ENCODE measurements at regions of chr11 and their contacts with region 1.

Region 1: DNA sequence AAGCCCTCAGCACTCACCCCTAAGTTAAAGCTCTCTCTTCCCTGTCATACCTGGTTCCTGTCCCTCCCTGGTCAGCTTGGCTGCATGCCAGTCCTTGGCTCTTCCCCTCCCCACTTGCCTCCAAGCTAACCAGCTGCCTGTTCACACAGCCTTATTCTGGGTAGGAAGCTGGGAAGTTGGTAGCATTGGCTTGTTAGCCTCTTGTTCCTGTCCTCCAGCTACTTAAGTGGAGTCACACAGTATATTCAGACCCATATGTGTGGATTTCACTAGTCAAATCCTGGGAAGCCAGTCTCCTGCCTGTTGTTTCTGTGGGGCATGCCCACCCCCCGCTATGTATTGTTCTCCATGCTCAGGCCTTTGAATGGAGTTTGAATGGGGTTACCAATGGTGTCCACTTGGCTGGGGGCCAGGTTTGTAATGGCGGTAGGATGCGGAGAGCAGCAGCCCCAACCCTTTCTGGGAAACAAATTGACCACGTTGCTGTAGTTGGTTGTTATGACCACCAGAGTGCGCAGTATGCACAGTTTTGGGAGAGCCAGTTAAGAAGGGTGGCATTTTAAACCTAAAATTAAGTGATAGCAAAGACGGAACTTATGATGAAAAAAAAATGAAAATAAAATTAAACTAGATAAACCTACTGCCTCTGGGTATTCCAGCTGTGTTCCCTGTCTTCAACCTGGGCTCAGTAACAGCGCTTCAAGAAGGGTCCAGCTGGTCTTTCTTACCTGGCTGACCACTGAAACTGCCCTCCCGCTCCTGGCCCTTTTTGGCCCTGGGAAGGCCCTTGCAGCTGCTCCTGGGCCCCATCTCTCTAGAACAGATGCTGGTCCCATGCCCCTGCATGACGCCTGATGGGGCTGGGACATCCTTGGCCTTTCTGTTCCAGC is 10.7 kb upstream of the RPS3 start:
- DNase-seq: peak; percentile 50 to 88 (median 58)
- ATAC-seq: peak; percentile 90
- H3K4me3 ChIP-seq: no peak overlapping the region
- H3K4me3 Mint-ChIP-seq: no peak overlapping the region
- H3K27ac ChIP-seq: no peak overlapping the region
- H3K27ac Mint-ChIP-seq: no peak overlapping the region
- H3K4me1 ChIP-seq: peaks cover 19% of the 10 kb centered on the region
- H3K4me1 Mint-ChIP-seq: peaks cover 12% of the 10 kb centered on the region
- H3K27me3 ChIP-seq: no peaks in the 10 kb centered on the region
- H3K27me3 Mint-ChIP-seq: no peaks in the 10 kb centered on the region
- CTCF ChIP-seq: peak; percentile 90

Region 2: DNA sequence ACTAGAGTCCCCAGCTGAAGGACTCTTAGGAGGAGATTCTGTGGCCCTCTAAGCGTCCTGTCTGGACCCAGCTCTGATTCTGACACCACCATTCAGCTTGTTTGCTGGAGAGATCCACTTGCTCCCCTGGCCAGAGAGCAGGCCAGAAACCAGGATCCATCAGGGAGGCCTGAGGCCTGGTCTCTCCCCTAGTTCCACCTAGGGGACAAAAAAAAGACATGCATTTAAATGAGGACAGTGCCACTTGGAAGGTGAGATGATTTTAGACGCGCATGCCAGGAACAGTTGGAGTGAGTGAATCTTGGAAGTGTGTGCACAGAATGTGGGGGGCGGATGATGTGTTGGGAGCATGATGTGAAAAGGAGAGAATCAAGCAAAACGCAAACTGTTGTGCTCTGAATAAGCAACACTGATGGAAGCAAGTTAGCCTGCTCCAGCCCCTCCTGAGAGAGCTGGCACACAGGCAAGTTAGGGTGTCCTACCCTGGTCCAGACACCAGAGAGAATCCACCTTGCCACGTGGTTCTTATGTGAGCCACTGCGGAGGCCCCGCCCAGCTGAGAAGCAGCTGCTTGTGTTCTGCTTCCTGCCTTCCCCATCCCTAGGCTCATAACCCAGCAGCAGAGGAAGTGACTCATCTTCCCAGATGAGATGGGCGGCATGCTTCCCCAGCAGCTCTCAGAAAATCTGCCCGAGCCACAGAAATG is 245.8 kb before region 1 on chr11:
- CTCF ChIA-PET with region 1: interaction called, 3 read pairs
- POLR2A ChIA-PET with region 1: no interaction called
- intact Hi-C with region 1: loop called (anchors 5 kb)
- DNase-seq: peak; percentile 20 to 88 (median 70)
- ATAC-seq: peak; percentile 94
- H3K4me3 ChIP-seq: no peak overlapping the region
- H3K4me3 Mint-ChIP-seq: no peak overlapping the region
- H3K27ac ChIP-seq: peak overlapping the region; percentile 37 to 55
- H3K27ac Mint-ChIP-seq: peak overlapping the region; percentile 18
- H3K4me1 ChIP-seq: peaks cover 34% of the 10 kb centered on the region
- H3K4me1 Mint-ChIP-seq: peaks cover 43% of the 10 kb centered on the region
- H3K27me3 ChIP-seq: no peaks in the 10 kb centered on the region
- H3K27me3 Mint-ChIP-seq: no peaks in the 10 kb centered on the region
- CTCF ChIP-seq: no peak

Region 3: GRCh38 chr11:75328426-75329277 is 60.0 kb before region 1 on chr11:
- CTCF ChIA-PET with region 1: interaction called, 8 read pairs
- POLR2A ChIA-PET with region 1: interaction called, 6 read pairs
- intact Hi-C with region 1: loop called (anchors 1 kb)
- DNase-seq: peak; percentile 20 to 80 (median 58)
- ATAC-seq: peak; percentile 96
- H3K4me3 ChIP-seq: no peak overlapping the region
- H3K4me3 Mint-ChIP-seq: peak overlapping the region; percentile 80
- H3K27ac ChIP-seq: peak overlapping the region; percentile 44 to 64
- H3K27ac Mint-ChIP-seq: peak overlapping the region; percentile 96
- H3K4me1 ChIP-seq: peaks cover 62% of the 10 kb centered on the region
- H3K4me1 Mint-ChIP-seq: peaks cover 80% of the 10 kb centered on the region
- H3K27me3 ChIP-seq: no peaks in the 10 kb centered on the region
- H3K27me3 Mint-ChIP-seq: no peaks in the 10 kb centered on the region
- CTCF ChIP-seq: peak; percentile 57

Region 4: DNA sequence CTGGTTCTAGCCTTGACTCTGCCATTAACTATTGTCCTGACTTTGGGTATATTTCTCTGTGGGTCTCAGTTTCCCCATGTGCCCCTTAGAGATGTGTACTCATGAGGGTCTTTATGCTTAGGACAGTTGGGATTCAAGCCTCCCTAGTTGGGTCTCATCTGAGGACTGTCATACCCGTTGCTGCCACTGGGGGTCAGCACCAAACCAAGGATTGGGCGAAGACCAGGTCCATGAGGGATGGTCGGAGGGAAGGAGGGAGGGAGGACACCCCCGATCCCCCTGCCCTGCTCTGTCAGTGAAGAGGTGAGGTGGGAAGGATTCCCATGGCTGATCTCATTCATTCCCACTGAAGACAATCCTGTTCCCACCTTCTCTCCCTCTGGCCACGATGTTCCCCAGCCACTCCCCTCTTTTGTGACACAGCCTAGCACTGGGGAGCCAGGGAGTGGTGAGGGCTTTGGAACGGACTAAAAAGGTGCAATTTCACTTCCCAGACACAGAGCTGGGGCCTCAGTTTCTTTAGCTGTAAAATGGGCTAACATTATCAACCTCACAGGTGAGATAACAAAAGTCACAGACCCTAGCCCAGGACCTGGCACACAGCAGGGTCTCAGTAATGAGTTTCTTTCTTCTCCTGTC is 56.8 kb after region 1 on chr11:
- CTCF ChIA-PET with region 1: no interaction called
- POLR2A ChIA-PET with region 1: no interaction called
- intact Hi-C with region 1: loop called (anchors 1 kb)
- DNase-seq: peak; percentile 58 to 85 (median 68)
- ATAC-seq: peak; percentile 94
- H3K4me3 ChIP-seq: no peak overlapping the region
- H3K4me3 Mint-ChIP-seq: no peak overlapping the region
- H3K27ac ChIP-seq: no peak overlapping the region
- H3K27ac Mint-ChIP-seq: no peak overlapping the region
- H3K4me1 ChIP-seq: peaks cover 4% of the 10 kb centered on the region
- H3K4me1 Mint-ChIP-seq: no peaks in the 10 kb centered on the region
- H3K27me3 ChIP-seq: no peaks in the 10 kb centered on the region
- H3K27me3 Mint-ChIP-seq: no peaks in the 10 kb centered on the region
- CTCF ChIP-seq: peak; percentile 96

Region 5: GRCh38 chr11:75577207-75577606 is 188.6 kb after region 1 on chr11:
- CTCF ChIA-PET with region 1: no interaction called
- POLR2A ChIA-PET with region 1: interaction called, 3 read pairs
- intact Hi-C with region 1: loop called in 1 of 2 experiments (anchors 1 kb)
- DNase-seq: peak; percentile 50 to 78 (median 62)
- ATAC-seq: peak; percentile 54
- H3K4me3 ChIP-seq: no peak overlapping the region
- H3K4me3 Mint-ChIP-seq: no peak overlapping the region
- H3K27ac ChIP-seq: no peak overlapping the region
- H3K27ac Mint-ChIP-seq: no peak overlapping the region
- H3K4me1 ChIP-seq: peaks cover 3% of the 10 kb centered on the region
- H3K4me1 Mint-ChIP-seq: peaks cover 1% of the 10 kb centered on the region
- H3K27me3 ChIP-seq: no peaks in the 10 kb centered on the region
- H3K27me3 Mint-ChIP-seq: no peaks in the 10 kb centered on the region
- CTCF ChIP-seq: peak; percentile 70